Activated CD4-positive, alpha-beta memory T cell treated with anti-CD3 and anti-CD28 coated beads for 36 hours (primary cell): ENCODE measurements at regions of chr5 and their contacts with region 1.

Region 1: GRCh38 chr5:170638454-170639220 is 134.8 kb downstream of the KCNIP1 start:
- DNase-seq: peak; percentile 77
- H3K4me3 Mint-ChIP-seq: no peak overlapping the region
- H3K27ac Mint-ChIP-seq: no peak overlapping the region
- H3K4me1 Mint-ChIP-seq: peaks cover 5% of the 10 kb centered on the region
- H3K27me3 Mint-ChIP-seq: peaks cover 4% of the 10 kb centered on the region

Region 2: GRCh38 chr5:170791325-170791954 is 152.8 kb after region 1 on chr5:
- CTCF ChIA-PET with region 1: interaction called, 32 read pairs
- POLR2A ChIA-PET with region 1: no interaction called
- intact Hi-C with region 1: loop called (anchors 1 kb)
- DNase-seq: peak; percentile 33
- H3K4me3 Mint-ChIP-seq: no peak overlapping the region
- H3K27ac Mint-ChIP-seq: no peak overlapping the region
- H3K4me1 Mint-ChIP-seq: no peaks in the 10 kb centered on the region
- H3K27me3 Mint-ChIP-seq: no peaks in the 10 kb centered on the region